ENCODE measurements at regions of chr2 and their contacts with region 1.

Region 1: DNA sequence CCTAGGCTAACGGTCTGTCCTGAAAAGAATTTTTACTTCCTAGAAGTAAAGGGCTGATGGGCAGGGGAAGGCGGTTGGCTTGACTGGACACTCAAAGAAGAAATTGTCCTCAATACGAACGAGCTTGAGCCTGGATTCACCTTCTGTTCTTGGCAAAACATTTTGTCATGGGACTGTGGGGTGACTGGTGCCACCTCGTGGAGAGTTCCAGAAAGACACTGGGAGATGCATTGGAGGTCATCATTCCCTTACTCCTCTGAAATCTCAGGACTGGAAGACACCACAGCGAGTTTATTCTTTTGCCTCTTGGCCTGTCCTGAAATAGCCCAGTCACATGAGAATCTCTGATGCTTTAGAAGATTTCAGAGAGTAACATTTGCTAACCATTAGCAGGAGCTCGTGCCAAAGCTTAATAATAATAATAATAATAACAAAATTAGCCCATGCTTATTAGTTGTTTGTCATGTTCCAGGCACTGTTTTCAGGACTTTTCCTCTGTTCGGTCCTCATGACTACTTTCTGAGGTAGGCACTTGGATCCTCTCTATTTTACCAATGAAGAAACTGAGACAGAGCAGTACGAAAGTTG is 44.5 kb downstream of the TMEM182 start:
- DNase-seq: peak; percentile 76
- H3K4me3 Mint-ChIP-seq: no peak overlapping the region
- H3K27ac Mint-ChIP-seq: no peak overlapping the region
- H3K4me1 Mint-ChIP-seq: no peaks in the 10 kb centered on the region
- H3K27me3 Mint-ChIP-seq: no peaks in the 10 kb centered on the region
- CTCF ChIP-seq: peak; percentile 73

Region 2: DNA sequence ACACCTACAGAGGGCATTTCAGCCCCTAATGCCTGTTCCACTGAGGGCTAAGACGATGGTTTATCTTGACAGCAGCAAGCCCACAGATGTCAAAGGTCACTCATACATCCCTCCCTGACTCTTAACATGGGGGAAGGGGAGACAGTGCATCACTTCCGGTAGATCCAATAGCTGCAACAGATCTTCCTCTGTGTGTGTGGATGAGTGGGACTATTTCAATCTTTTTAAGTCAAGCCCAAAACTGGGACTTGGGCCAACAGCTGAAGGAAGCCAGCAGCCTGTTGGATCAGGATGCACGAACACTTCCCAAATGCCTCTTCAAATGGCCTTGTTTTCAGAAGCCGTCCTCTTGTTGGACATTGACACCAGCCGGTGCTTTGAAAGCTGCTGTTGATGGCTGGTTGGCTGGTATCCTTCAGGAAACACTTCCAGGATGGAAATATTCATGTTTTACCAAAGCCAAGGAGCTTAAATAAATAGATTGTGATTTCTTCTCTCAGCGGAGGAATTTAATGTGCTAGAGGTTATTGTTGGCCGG is 755.4 kb before region 1 on chr2:
- CTCF ChIA-PET with region 1: no interaction called
- POLR2A ChIA-PET with region 1: no interaction called
- intact Hi-C with region 1: no loop called
- DNase-seq: peak; percentile 28
- H3K4me3 Mint-ChIP-seq: no peak overlapping the region
- H3K27ac Mint-ChIP-seq: peak overlapping the region; percentile 82
- H3K4me1 Mint-ChIP-seq: peaks cover 31% of the 10 kb centered on the region
- H3K27me3 Mint-ChIP-seq: no peaks in the 10 kb centered on the region
- CTCF ChIP-seq: no peak

Region 3: DNA sequence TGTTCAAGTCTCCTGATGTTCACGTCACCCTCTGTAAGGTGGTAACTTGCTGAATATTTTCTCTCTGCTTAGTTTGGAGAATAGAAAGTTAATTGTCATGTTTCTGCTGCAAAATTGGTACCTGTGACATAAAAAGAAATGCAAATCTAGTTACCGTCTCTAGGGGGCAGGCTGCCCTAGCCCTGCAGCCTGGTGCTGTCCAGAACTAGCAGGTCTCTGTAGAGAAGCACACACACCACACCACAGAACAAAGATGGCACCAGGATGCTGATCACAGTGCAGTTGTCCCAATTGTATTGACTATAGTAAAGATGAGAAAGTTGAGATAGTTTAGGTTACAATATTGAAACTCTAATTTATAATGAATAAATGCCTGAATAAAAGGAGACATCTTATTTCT is 286.3 kb before region 1 on chr2:
- CTCF ChIA-PET with region 1: interaction called, 5 read pairs
- POLR2A ChIA-PET with region 1: no interaction called
- intact Hi-C with region 1: loop called (anchors 1 kb)
- DNase-seq: peak; percentile 54
- H3K4me3 Mint-ChIP-seq: no peak overlapping the region
- H3K27ac Mint-ChIP-seq: no peak overlapping the region
- H3K4me1 Mint-ChIP-seq: peaks cover 1% of the 10 kb centered on the region
- H3K27me3 Mint-ChIP-seq: no peaks in the 10 kb centered on the region
- CTCF ChIP-seq: peak; percentile 64

Region 4: DNA sequence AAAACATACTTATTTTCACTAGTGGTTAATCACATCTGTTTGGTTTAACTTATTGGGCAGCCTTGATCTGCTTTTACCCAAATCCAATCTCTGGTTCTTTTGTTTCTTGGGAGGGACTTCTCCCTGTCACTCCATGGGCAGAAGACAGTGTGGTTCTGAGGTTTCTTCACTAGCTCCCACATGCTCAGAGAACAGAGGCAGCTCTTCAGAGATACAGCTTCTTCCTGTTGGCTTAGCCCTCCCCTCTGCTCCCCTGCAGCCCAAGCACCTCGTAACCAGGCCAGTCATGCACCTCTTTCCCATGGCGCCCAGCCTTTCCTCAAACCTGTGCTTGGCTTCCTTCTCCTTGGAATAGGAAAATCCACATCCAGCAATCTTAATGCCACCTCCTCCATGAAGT is 154.2 kb before region 1 on chr2:
- CTCF ChIA-PET with region 1: no interaction called
- POLR2A ChIA-PET with region 1: no interaction called
- intact Hi-C with region 1: no loop called
- DNase-seq: no peak
- H3K4me3 Mint-ChIP-seq: no peak overlapping the region
- H3K27ac Mint-ChIP-seq: no peak overlapping the region
- H3K4me1 Mint-ChIP-seq: no peaks in the 10 kb centered on the region
- H3K27me3 Mint-ChIP-seq: peaks cover 44% of the 10 kb centered on the region
- CTCF ChIP-seq: no peak

Region 5: GRCh38 chr2:102667072-102667471 is 139.3 kb before region 1 on chr2:
- CTCF ChIA-PET with region 1: no interaction called
- POLR2A ChIA-PET with region 1: no interaction called
- intact Hi-C with region 1: no loop called
- DNase-seq: no peak
- H3K4me3 Mint-ChIP-seq: no peak overlapping the region
- H3K27ac Mint-ChIP-seq: no peak overlapping the region
- H3K4me1 Mint-ChIP-seq: no peaks in the 10 kb centered on the region
- H3K27me3 Mint-ChIP-seq: no peaks in the 10 kb centered on the region
- CTCF ChIP-seq: no peak

Region 6: DNA sequence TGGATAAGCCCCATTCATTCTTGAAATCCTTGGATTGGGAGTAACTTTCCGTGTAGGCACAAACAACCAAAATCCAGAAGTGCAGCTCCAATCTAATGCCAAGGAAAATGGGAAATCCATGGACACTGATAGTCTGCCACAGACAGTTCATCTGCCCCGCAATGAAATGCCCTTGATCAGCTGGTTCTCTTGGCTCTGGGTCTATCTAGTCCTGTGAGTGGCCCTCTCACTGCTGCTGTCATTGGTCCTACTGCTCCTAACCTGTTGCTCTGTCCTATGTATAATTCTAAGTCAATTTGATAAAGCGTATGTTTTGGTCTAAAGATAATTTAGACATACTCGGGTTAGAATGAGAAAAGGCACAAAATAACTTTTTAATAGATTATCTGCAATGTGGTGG is 58.2 kb before region 1 on chr2:
- CTCF ChIA-PET with region 1: interaction called, 96 read pairs
- POLR2A ChIA-PET with region 1: no interaction called
- intact Hi-C with region 1: loop called (anchors 1 kb)
- DNase-seq: no peak
- H3K4me3 Mint-ChIP-seq: no peak overlapping the region
- H3K27ac Mint-ChIP-seq: no peak overlapping the region
- H3K4me1 Mint-ChIP-seq: no peaks in the 10 kb centered on the region
- H3K27me3 Mint-ChIP-seq: no peaks in the 10 kb centered on the region
- CTCF ChIP-seq: no peak

Region 7: DNA sequence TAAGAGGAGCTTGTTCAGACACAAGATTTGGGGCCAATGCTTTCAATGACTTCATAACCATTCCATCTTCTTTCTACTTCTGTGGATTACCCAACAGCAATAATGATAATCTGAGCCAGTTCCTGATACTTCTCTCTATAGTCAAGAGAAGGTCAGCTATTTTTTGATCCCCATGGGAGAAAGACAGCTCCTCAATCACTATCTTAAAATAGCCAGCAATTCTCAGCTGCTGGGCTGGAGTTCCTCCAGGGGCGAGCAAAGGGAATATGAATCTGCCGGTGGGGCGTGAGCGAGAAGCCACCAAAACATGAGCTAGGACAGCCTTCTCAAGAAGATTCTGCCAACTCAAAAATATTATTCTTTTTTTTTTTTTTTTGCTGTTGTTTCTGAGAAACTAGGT is 44.6 kb before region 1 on chr2 and contains the start of gene TMEM182:
- CTCF ChIA-PET with region 1: interaction called, 96 read pairs
- POLR2A ChIA-PET with region 1: no interaction called
- intact Hi-C with region 1: no loop called
- DNase-seq: no peak
- H3K4me3 Mint-ChIP-seq: no peak within 1 kb of the TSS
- H3K27ac Mint-ChIP-seq: no peak within 1 kb of the TSS
- H3K4me1 Mint-ChIP-seq: no peaks in the 10 kb centered on the region
- H3K27me3 Mint-ChIP-seq: no peaks in the 10 kb centered on the region
- CTCF ChIP-seq: no peak
- total RNA-seq, gene TMEM182: 5.3 and 5.7 TPM in 2 replicates

Region 8: GRCh38 chr2:102789344-102790090 is 16.8 kb before region 1 on chr2:
- CTCF ChIA-PET with region 1: interaction called, 18 read pairs
- POLR2A ChIA-PET with region 1: interaction called, 3 read pairs
- intact Hi-C with region 1: no loop called
- DNase-seq: no peak
- H3K4me3 Mint-ChIP-seq: no peak overlapping the region
- H3K27ac Mint-ChIP-seq: no peak overlapping the region
- H3K4me1 Mint-ChIP-seq: no peaks in the 10 kb centered on the region
- H3K27me3 Mint-ChIP-seq: no peaks in the 10 kb centered on the region
- CTCF ChIP-seq: no peak

Region 9: DNA sequence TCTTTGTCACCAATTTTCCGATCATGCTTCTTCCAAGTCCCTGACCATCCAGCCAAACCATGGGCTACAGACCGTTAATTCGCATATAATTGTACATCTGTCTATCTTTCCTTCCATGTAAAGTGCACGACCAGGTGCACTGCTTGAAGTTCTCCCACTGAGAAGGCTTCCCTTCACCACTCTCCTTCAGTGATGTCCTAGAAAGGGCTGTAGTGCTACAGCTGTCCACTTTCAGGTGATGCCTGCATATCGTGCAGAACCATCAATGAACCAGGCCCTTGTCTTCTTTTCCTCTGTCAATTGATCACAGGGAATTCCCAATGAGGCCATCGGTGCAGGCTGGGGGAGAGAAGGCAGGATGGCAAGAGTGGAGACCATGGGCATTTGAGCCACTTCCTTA is 104.4 kb after region 1 on chr2:
- CTCF ChIA-PET with region 1: no interaction called
- POLR2A ChIA-PET with region 1: no interaction called
- intact Hi-C with region 1: no loop called
- DNase-seq: no peak
- H3K4me3 Mint-ChIP-seq: no peak overlapping the region
- H3K27ac Mint-ChIP-seq: no peak overlapping the region
- H3K4me1 Mint-ChIP-seq: peaks cover 5% of the 10 kb centered on the region
- H3K27me3 Mint-ChIP-seq: no peaks in the 10 kb centered on the region
- CTCF ChIP-seq: no peak